Activated CD4-positive, alpha-beta T cell treated with anti-CD3 and anti-CD28 coated beads for 36 hours (primary cell): ENCODE measurements at regions of chr1 and their contacts with region 1.

Region 1: DNA sequence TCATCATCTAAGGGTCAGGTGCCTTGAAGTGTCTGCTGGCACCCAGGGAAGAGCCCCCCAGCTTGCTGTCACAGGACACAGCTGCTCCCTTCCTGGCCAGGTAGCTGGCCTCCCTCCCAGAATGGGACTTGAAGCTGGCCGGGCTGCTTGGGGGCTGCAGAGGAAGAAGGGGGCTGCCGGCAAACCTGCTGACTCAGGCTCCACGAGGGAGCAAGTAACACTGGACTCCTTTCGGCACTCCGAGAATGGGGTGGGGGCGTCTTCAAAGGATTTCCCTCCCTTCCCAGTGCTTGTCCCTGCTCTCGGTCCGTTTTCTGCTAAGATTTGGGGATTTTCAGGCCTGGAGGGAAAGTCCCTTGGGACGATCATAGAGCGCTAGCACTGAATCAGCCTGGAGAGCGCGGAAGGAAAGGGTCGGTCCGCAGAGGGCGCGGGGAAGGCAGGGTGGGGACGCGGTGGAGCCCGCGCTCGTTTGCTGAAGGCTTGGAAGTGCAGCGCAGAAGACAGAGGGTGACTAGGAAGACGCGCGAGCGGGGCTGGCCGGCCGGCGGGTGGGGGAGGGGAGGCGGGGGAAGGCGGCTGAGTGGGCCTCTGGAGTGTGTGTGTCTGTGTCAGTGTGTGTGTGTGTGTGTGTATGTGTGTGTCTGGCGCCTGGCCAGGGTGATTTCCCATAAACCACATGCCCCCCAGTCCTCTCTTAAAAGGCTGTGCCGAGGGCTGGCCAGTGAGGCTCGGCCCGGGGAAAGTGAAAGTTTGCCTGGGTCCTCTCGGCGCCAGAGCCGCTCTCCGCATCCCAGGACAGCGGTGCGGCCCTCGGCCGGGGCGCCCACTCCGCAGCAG is at the start of gene CSF1:
- DNase-seq: peak; percentile 72
- ATAC-seq: peak; percentile 47
- H3K4me3 Mint-ChIP-seq: peak within 1 kb of the TSS; percentile 78
- H3K27ac Mint-ChIP-seq: peak within 1 kb of the TSS; percentile 85
- H3K4me1 Mint-ChIP-seq: peaks cover 61% of the 10 kb centered on the region
- H3K27me3 Mint-ChIP-seq: peaks cover 2% of the 10 kb centered on the region
- total RNA-seq, gene CSF1: 37.7 to 44.8 TPM

Region 2: DNA sequence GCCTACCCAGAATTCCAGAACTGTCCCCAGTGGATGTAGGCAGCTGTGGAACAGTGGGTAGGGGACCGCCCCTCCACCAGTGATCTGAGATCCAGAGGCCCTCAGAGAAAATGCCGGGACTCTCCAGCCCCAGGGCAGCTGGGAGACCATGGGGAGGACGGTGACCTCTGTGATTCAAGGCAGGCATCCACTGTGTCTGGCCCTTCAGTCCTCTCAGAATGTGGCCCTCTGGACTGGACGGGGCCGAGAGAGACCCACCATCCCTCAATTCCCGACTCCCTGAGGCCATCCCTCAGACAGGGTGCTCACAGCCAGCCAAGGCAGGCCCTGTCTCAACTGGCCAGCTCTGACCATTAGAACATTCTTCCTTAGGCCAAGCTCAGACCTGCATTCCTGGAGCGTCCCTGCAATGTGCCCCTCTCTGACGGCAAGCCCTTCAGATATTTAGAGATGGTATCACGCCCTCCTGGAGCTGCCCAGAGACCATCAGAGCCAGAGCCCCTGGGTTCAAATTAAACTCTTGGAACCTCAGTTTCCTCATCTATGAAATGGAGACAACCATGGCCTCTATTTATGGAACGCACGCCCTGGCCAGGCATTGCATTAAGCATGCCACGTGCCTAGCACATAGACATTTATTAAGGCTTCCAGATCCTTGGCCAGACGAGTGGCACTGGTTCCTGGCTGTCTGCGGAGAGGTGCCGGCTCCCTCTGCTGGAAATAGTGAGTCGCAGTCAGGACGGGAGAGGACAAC is 137.0 kb before region 1 on chr1:
- CTCF ChIA-PET with region 1: interaction called, 7 read pairs
- POLR2A ChIA-PET with region 1: no interaction called
- intact Hi-C with region 1: loop called (anchors 1 to 2 kb)
- DNase-seq: peak; percentile 85
- ATAC-seq: peak; percentile 88
- H3K4me3 Mint-ChIP-seq: no peak overlapping the region
- H3K27ac Mint-ChIP-seq: no peak overlapping the region
- H3K4me1 Mint-ChIP-seq: no peaks in the 10 kb centered on the region
- H3K27me3 Mint-ChIP-seq: no peaks in the 10 kb centered on the region

Region 3: DNA sequence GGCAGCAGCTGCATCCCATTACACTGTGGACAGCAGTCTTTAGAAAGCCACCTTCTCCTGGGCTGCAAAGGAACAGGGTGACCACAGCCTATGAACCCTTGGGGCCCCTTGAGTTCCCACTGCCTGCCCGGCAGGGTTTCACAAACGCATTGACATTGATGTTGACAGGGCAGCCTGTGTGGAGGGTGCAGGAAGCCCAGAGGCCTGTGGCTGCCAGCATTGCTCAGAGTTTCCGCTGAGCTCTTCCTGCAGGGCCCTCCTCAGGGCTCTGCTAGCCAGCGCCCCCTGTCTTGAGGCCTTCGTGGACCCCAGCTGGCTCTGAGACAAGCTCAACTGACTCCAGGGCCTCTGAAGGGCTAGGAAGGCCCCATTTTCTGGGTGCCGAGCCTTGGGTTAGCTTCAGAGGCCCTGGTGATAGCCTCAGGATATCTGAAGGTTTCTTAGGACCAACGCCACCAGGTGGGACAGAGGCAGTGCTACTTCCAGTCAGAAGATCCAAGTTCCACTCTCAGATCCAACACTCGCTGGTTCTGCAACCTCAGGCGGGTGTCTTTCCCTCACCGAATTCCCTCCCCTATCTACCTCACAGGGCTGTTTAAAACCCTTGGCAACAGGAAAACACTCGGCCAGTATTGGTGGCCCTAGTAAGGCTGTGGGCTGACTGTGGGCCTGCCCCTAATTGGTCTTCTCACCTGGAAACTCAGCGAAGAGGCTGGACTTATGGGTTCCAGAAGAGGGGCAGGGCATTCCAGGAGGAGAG is 119.4 kb before region 1 on chr1:
- CTCF ChIA-PET with region 1: interaction called, 4 read pairs
- POLR2A ChIA-PET with region 1: no interaction called
- intact Hi-C with region 1: loop called (anchors 2 to 5 kb)
- DNase-seq: peak; percentile 93
- ATAC-seq: peak; percentile 94
- H3K4me3 Mint-ChIP-seq: no peak overlapping the region
- H3K27ac Mint-ChIP-seq: peak overlapping the region; percentile 87
- H3K4me1 Mint-ChIP-seq: peaks cover 55% of the 10 kb centered on the region
- H3K27me3 Mint-ChIP-seq: no peaks in the 10 kb centered on the region

Region 4: GRCh38 chr1:109802901-109803561 is 107.3 kb before region 1 on chr1:
- CTCF ChIA-PET with region 1: interaction called, 6 read pairs
- POLR2A ChIA-PET with region 1: no interaction called
- intact Hi-C with region 1: loop called in 1 of 2 experiments (anchors 1 kb)
- DNase-seq: no peak
- ATAC-seq: peak; percentile 22
- H3K4me3 Mint-ChIP-seq: peak overlapping the region; percentile 34
- H3K27ac Mint-ChIP-seq: peak overlapping the region; percentile 92
- H3K4me1 Mint-ChIP-seq: peaks cover 54% of the 10 kb centered on the region
- H3K27me3 Mint-ChIP-seq: no peaks in the 10 kb centered on the region

Region 5: GRCh38 chr1:109821831-109822745 is 88.3 kb before region 1 on chr1:
- CTCF ChIA-PET with region 1: no interaction called
- POLR2A ChIA-PET with region 1: no interaction called
- intact Hi-C with region 1: no loop called
- DNase-seq: no peak
- ATAC-seq: no peak
- H3K4me3 Mint-ChIP-seq: no peak overlapping the region
- H3K27ac Mint-ChIP-seq: peak overlapping the region; percentile 32
- H3K4me1 Mint-ChIP-seq: peaks cover 27% of the 10 kb centered on the region
- H3K27me3 Mint-ChIP-seq: no peaks in the 10 kb centered on the region

Region 6: DNA sequence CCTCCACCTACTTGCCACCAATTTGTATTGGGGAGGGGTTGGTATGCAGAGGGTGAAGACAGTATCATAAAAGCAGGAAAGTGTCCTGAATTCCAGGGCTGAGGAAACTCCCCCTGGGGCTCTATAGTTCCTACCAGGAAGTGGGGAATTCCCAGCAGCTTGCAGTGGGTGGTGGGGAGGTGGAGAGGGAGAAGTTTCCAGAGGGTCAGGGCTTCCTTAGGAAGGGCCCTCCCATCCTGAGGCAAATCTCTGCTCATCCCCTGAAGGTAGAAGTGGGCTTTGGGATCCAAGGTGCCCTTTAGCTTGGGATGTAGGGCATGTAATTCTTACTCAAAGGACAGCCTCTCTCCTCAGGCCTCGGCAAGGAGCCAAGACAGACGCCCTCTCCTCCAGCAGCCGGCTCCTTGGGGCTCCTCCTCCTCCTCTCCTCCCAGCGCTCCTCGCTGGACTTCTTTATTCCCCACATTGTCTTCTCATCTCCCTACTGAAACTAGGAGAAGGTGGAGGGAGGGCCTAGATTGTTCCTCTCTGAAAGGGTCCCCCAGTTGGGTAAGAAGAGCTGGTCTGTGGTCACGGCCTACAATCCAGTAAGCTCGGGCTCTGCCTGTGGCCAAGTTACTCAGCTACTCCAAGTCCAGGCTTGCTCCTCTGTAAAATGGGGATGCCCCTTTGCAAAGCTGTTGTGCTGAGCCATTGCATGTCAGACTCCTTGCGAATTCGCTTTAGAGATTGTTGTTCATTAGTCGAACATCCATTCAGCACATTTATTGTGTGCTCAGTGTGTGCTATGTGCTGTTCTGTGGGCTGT is 17.6 kb before region 1 on chr1:
- CTCF ChIA-PET with region 1: interaction called, 4 read pairs
- POLR2A ChIA-PET with region 1: interaction called, 3 read pairs
- intact Hi-C with region 1: loop called (anchors 1 kb)
- DNase-seq: no peak
- ATAC-seq: no peak
- H3K4me3 Mint-ChIP-seq: no peak overlapping the region
- H3K27ac Mint-ChIP-seq: no peak overlapping the region
- H3K4me1 Mint-ChIP-seq: peaks cover 34% of the 10 kb centered on the region
- H3K27me3 Mint-ChIP-seq: no peaks in the 10 kb centered on the region

Region 7: DNA sequence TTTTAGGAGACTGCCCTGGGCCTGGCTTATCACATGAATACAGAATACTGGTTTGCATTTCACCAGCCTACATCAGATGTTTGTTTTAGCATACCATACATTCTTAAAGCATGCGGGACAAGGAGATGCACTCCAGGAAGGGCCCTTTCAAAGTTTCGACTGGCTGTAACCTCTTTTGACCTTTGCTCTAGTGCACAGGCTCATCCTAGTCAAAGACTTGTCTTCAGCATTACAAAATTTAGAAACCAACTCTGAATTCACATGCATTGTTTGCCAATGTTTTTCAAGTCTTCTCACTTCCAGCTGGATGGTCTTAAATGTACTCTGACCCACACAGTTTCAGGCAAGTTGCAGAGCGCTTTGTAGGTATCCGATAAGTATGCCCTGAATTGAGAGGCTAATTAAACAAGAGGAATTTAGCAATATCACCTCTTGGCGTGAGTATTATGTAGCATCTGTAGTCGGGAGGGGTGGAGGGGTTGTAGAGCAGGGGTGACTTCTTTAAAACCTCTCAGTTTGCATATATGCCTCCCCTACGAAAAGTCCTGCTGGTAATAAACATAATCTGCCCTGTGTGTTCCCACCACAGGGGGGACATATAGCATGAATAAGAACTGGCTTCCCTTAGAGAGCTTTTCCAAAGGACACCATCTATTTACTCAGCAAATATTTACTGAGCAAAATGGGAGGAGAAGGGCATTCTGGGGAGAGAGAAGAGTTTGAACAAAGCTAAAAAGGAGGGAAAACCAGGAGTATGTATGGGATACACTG is 49.8 kb after region 1 on chr1:
- CTCF ChIA-PET with region 1: no interaction called
- POLR2A ChIA-PET with region 1: no interaction called
- intact Hi-C with region 1: loop called in 1 of 2 experiments (anchors 1 kb)
- DNase-seq: no peak
- ATAC-seq: no peak
- H3K4me3 Mint-ChIP-seq: no peak overlapping the region
- H3K27ac Mint-ChIP-seq: no peak overlapping the region
- H3K4me1 Mint-ChIP-seq: no peaks in the 10 kb centered on the region
- H3K27me3 Mint-ChIP-seq: peaks cover 2% of the 10 kb centered on the region